ENCODE measurements at regions of chr1 and their contacts with region 1.

Region 1: GRCh38 chr1:86833461-86834215 is 80.3 kb downstream of the SELENOF start:
- DNase-seq: peak; percentile 51 to 61 (median 58)
- H3K4me3 ChIP-seq: no peak overlapping the region
- H3K4me3 Mint-ChIP-seq: no peak overlapping the region
- H3K27ac ChIP-seq: no peak overlapping the region
- H3K27ac Mint-ChIP-seq: peak overlapping the region in 2 of 7 donors; percentile 4 to 35
- H3K4me1 ChIP-seq: peaks cover 5% of the 10 kb centered on the region
- H3K4me1 Mint-ChIP-seq: peaks cover 0 to 5% (median 2%) of the 10 kb centered on the region in 4 donors
- H3K27me3 ChIP-seq: no peaks in the 10 kb centered on the region
- H3K27me3 Mint-ChIP-seq: peaks cover 4 to 5% of the 10 kb centered on the region in 2 donors

Region 2: GRCh38 chr1:86207323-86207722 is 626.3 kb before region 1 on chr1:
- CTCF ChIA-PET with region 1: no interaction called
- POLR2A ChIA-PET with region 1: no interaction called
- intact Hi-C with region 1: no loop called
- DNase-seq: no peak
- H3K4me3 ChIP-seq: no peak overlapping the region
- H3K4me3 Mint-ChIP-seq: no peak overlapping the region
- H3K27ac ChIP-seq: no peak overlapping the region
- H3K27ac Mint-ChIP-seq: no peak overlapping the region
- H3K4me1 ChIP-seq: no peaks in the 10 kb centered on the region
- H3K4me1 Mint-ChIP-seq: no peaks in the 10 kb centered on the region
- H3K27me3 ChIP-seq: no peaks in the 10 kb centered on the region
- H3K27me3 Mint-ChIP-seq: no peaks in the 10 kb centered on the region

Region 3: GRCh38 chr1:86965012-86965826 is 131.6 kb after region 1 on chr1:
- CTCF ChIA-PET with region 1: interaction called, 16 read pairs
- POLR2A ChIA-PET with region 1: no interaction called
- intact Hi-C with region 1: no loop called
- DNase-seq: peak in 4 of 5 donors; percentile 3 to 23 (median 18)
- H3K4me3 ChIP-seq: no peak overlapping the region
- H3K4me3 Mint-ChIP-seq: no peak overlapping the region
- H3K27ac ChIP-seq: no peak overlapping the region
- H3K27ac Mint-ChIP-seq: peak overlapping the region in 1 of 7 donors; percentile 2
- H3K4me1 ChIP-seq: no peaks in the 10 kb centered on the region
- H3K4me1 Mint-ChIP-seq: peaks cover 0 to 8% (median 0%) of the 10 kb centered on the region in 4 donors
- H3K27me3 ChIP-seq: no peaks in the 10 kb centered on the region
- H3K27me3 Mint-ChIP-seq: no peaks in the 10 kb centered on the region

Region 4: DNA sequence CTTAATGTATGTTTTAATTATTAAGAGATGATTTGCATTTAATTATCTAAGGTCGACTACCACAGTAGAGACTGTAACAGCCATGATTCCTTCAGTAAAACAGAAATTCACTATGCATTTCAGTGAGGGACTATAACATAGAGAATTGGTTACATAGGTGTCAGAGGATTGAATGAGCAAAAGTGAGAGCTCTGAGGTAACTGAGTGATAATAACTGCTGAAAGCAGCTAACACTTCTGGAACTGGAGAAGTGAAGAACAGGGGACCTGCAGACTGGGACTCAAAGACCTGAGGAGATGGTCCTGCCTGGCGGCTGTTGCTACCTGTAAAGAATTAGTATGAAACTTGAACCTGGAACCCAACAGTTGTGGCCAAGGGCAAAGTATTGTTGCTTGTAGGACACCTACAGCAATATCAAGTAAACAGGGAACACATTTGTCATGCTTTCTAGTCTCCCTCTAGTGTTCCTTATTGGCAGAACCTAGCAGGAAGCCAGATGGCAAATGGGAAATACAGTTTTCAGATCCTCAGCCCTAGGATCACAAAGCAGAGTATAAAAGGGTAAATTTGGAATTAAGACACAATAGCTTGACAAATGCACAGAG is 191.4 kb after region 1 on chr1:
- CTCF ChIA-PET with region 1: interaction called, 3 read pairs
- POLR2A ChIA-PET with region 1: no interaction called
- intact Hi-C with region 1: loop called (anchors 1 kb)
- DNase-seq: peak in 2 of 5 donors; percentile 3 to 4
- H3K4me3 ChIP-seq: no peak overlapping the region
- H3K4me3 Mint-ChIP-seq: no peak overlapping the region
- H3K27ac ChIP-seq: no peak overlapping the region
- H3K27ac Mint-ChIP-seq: no peak overlapping the region
- H3K4me1 ChIP-seq: no peaks in the 10 kb centered on the region
- H3K4me1 Mint-ChIP-seq: peaks cover 0 to 6% (median 1%) of the 10 kb centered on the region in 4 donors
- H3K27me3 ChIP-seq: no peaks in the 10 kb centered on the region
- H3K27me3 Mint-ChIP-seq: no peaks in the 10 kb centered on the region

Region 5: GRCh38 chr1:87084244-87084836 is 250.7 kb after region 1 on chr1:
- CTCF ChIA-PET with region 1: interaction called, 102 read pairs
- POLR2A ChIA-PET with region 1: no interaction called
- intact Hi-C with region 1: loop called (anchors 1 kb)
- DNase-seq: peak in 4 of 5 donors; percentile 43 to 46 (median 44)
- H3K4me3 ChIP-seq: no peak overlapping the region
- H3K4me3 Mint-ChIP-seq: no peak overlapping the region
- H3K27ac ChIP-seq: no peak overlapping the region
- H3K27ac Mint-ChIP-seq: no peak overlapping the region
- H3K4me1 ChIP-seq: no peaks in the 10 kb centered on the region
- H3K4me1 Mint-ChIP-seq: peaks cover 0 to 3% (median 1%) of the 10 kb centered on the region in 4 donors
- H3K27me3 ChIP-seq: no peaks in the 10 kb centered on the region
- H3K27me3 Mint-ChIP-seq: no peaks in the 10 kb centered on the region